Left ventricle myocardium inferior (tissue), 1 donor: ENCODE measurements at regions of chr20 and their contacts with region 1.

Region 1: GRCh38 chr20:46132705-46133120 is 14.6 kb downstream of the CD40 start:
- DNase-seq: peak; percentile 68
- H3K4me3 ChIP-seq: no peak overlapping the region
- H3K27ac ChIP-seq: no peak overlapping the region
- H3K4me1 ChIP-seq: peaks cover 38% of the 10 kb centered on the region
- H3K27me3 ChIP-seq: peaks cover 54% of the 10 kb centered on the region
- CTCF ChIP-seq: peak; percentile 91

Region 2: GRCh38 chr20:46324960-46325703 is 192.4 kb after region 1 on chr20:
- intact Hi-C with region 1: loop called (anchors 10 kb)
- DNase-seq: no peak
- H3K4me3 ChIP-seq: no peak overlapping the region
- H3K27ac ChIP-seq: no peak overlapping the region
- H3K4me1 ChIP-seq: no peaks in the 10 kb centered on the region
- H3K27me3 ChIP-seq: peaks cover 98% of the 10 kb centered on the region
- CTCF ChIP-seq: peak; percentile 48

Region 3: DNA sequence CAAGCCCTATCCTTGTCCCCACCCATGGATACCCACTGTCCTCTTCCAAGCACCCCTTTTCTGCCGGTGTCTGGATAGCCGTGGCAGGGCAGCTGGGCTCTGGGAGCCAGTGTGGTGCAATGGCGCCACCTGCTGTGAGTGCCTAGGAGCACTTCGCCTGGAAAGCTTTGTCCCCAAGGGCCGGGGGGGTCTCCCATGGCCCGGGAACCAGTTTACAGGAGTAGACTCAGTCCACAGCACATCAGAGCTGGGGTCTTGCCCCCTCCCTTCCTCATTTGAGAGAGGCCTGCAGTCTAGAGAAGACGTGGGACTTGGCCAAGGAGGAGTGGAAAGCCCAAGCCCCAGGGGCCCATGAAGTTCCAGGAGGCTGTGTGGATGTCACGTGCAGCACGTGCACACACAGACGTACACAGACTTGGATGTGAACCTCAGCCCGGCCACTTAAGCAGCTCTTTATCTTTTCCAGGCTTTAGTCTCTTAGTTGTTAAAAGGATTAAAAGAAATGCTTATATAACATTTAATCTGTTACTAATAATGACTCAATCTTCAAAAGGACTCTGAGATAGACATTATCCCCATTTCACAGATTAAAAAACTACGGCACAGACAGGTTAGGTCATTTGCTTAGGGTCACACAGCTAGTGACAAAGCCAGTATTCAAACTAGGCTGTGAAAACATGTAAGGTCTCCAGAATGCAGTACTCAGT is 216.5 kb after region 1 on chr20:
- intact Hi-C with region 1: loop called (anchors 10 kb)
- DNase-seq: peak; percentile 57
- H3K4me3 ChIP-seq: no peak overlapping the region
- H3K27ac ChIP-seq: no peak overlapping the region
- H3K4me1 ChIP-seq: peaks cover 12% of the 10 kb centered on the region
- H3K27me3 ChIP-seq: no peaks in the 10 kb centered on the region
- CTCF ChIP-seq: peak; percentile 87